ENCODE measurements at regions of chrX and their contacts with region 1.

Region 1: DNA sequence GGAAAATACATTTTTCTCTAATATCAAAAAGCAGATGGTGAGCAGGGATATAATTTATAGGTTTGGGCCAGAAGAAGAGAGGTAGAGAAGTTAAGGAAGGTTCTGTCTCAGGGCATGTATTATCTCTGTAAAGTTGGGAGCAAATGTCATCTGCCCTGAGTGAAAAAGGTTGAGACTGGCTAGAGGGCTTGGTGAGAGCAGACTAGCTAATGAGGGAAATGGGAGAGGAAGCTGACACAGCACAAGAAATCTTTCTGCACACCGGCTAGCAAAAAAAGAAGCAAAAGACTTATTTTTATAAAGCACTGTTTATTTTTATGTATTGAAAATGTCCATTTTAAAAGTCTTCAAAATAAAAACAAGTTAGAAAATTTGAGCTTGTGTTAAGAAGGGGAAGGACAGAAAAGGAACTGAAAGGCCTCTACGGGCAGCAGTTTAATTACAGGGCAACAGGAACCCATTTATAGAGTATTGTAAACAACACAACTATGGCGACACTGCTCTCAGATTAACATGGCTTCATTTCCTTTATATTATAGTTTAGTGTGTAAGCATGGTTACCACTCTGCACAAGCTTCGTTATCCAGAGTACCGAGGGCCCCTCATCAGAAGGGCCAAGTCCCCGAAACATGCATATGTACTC is 17.4 kb downstream of the CD40LG start:
- DNase-seq: no peak
- ATAC-seq: no peak
- H3K4me3 ChIP-seq: no peak overlapping the region
- H3K4me3 Mint-ChIP-seq: no peak overlapping the region
- H3K27ac ChIP-seq: no peak overlapping the region
- H3K27ac Mint-ChIP-seq: no peak overlapping the region
- H3K4me1 ChIP-seq: peaks cover 26% of the 10 kb centered on the region
- H3K4me1 Mint-ChIP-seq: peaks cover 48% of the 10 kb centered on the region
- H3K27me3 ChIP-seq: no peaks in the 10 kb centered on the region
- H3K27me3 Mint-ChIP-seq: no peaks in the 10 kb centered on the region
- CTCF ChIP-seq: no peak

Region 2: GRCh38 chrX:136616987-136617685 is 48.2 kb before region 1 on chrX:
- CTCF ChIA-PET with region 1: no interaction called
- POLR2A ChIA-PET with region 1: no interaction called
- intact Hi-C with region 1: loop called in 1 of 2 experiments (anchors 5 kb)
- DNase-seq: peak in 3 of 9 experiments; percentile 35 to 63 (median 39)
- ATAC-seq: peak; percentile 98
- H3K4me3 ChIP-seq: no peak overlapping the region
- H3K4me3 Mint-ChIP-seq: peak overlapping the region; percentile 42
- H3K27ac ChIP-seq: peak overlapping the region in 1 of 2 experiments; percentile 19
- H3K27ac Mint-ChIP-seq: peak overlapping the region; percentile 91
- H3K4me1 ChIP-seq: peaks cover 35% of the 10 kb centered on the region
- H3K4me1 Mint-ChIP-seq: peaks cover 44% of the 10 kb centered on the region
- H3K27me3 ChIP-seq: no peaks in the 10 kb centered on the region
- H3K27me3 Mint-ChIP-seq: no peaks in the 10 kb centered on the region
- CTCF ChIP-seq: no peak

Region 3: DNA sequence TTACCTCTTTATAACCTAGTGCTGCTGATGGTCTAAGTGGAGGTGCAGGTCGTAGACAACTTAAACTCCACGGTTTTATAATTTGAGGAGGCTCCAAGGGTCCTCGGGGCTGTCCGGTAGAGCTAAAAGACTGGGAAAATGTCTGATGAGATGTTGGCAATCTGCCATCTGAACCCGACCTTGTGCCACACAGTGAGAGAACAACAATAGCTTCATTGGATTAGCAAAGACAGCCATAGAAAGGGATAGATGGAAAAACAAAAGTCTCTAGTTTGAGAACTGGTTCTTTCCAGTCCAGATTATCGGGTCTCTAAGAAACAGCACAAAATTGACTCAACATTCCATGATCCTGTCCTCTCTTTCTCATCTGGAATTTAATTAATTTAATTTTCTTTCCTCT is 14.2 kb after region 1 on chrX:
- CTCF ChIA-PET with region 1: no interaction called
- POLR2A ChIA-PET with region 1: no interaction called
- intact Hi-C with region 1: loop called in 1 of 2 experiments (anchors 2 kb)
- DNase-seq: no peak
- ATAC-seq: no peak
- H3K4me3 ChIP-seq: no peak overlapping the region
- H3K4me3 Mint-ChIP-seq: no peak overlapping the region
- H3K27ac ChIP-seq: no peak overlapping the region
- H3K27ac Mint-ChIP-seq: peak overlapping the region; percentile 70
- H3K4me1 ChIP-seq: peaks cover 48% of the 10 kb centered on the region
- H3K4me1 Mint-ChIP-seq: peaks cover 49% of the 10 kb centered on the region
- H3K27me3 ChIP-seq: no peaks in the 10 kb centered on the region
- H3K27me3 Mint-ChIP-seq: no peaks in the 10 kb centered on the region
- CTCF ChIP-seq: no peak